ENCODE measurements at regions of chr21 and their contacts with region 1.

Region 1: GRCh38 chr21:33127154-33127893 is 57.4 kb downstream of the OLIG1 start:
- DNase-seq: no peak
- H3K4me3 ChIP-seq: peak overlapping the region in 2 of 4 donors; percentile 35 to 36
- H3K27ac ChIP-seq: no peak overlapping the region
- H3K4me1 ChIP-seq: peaks cover 0 to 6% (median 0%) of the 10 kb centered on the region in 4 donors
- H3K27me3 ChIP-seq: peaks cover 4 to 27% (median 19%) of the 10 kb centered on the region in 3 donors
- CTCF ChIP-seq: peak in 2 of 4 experiments; percentile 28 to 29
- EP300 ChIP-seq: no peak
- POLR2A ChIP-seq: no peak

Region 2: GRCh38 chr21:32940079-32941014 is 187.0 kb before region 1 on chr21:
- intact Hi-C with region 1: loop called (anchors 5 kb)
- DNase-seq: no peak
- H3K4me3 ChIP-seq: no peak overlapping the region
- H3K27ac ChIP-seq: no peak overlapping the region
- H3K4me1 ChIP-seq: no peaks in the 10 kb centered on the region
- H3K27me3 ChIP-seq: peaks cover 0 to 6% (median 0%) of the 10 kb centered on the region in 3 donors
- CTCF ChIP-seq: peak in 3 of 4 experiments; percentile 43 to 63 (median 49)
- EP300 ChIP-seq: no peak
- POLR2A ChIP-seq: no peak

Region 3: GRCh38 chr21:33069976-33070811 is 57.1 kb before region 1 on chr21 and contains the start of gene OLIG1:
- intact Hi-C with region 1: no loop called
- DNase-seq: no peak
- H3K4me3 ChIP-seq: peak within 1 kb of the TSS in 3 of 4 donors; percentile 10 to 40 (median 36)
- H3K27ac ChIP-seq: no peak within 1 kb of the TSS
- H3K4me1 ChIP-seq: peaks cover 0 to 25% (median 24%) of the 10 kb centered on the region in 4 donors
- H3K27me3 ChIP-seq: peaks cover 44 to 100% (median 74%) of the 10 kb centered on the region in 3 donors
- CTCF ChIP-seq: no peak
- EP300 ChIP-seq: no peak
- POLR2A ChIP-seq: no peak
- total RNA-seq, gene OLIG1: not detected

Region 4: GRCh38 chr21:33183430-33183829 is 56.1 kb after region 1 on chr21:
- intact Hi-C with region 1: no loop called
- DNase-seq: no peak
- H3K4me3 ChIP-seq: no peak overlapping the region
- H3K27ac ChIP-seq: no peak overlapping the region
- H3K4me1 ChIP-seq: no peaks in the 10 kb centered on the region
- H3K27me3 ChIP-seq: peaks cover 0 to 18% (median 3%) of the 10 kb centered on the region in 3 donors
- CTCF ChIP-seq: no peak
- EP300 ChIP-seq: no peak
- POLR2A ChIP-seq: no peak

Measured in sigmoid colon (tissue), 7 donors.